ENCODE measurements at regions of chr3 and their contacts with region 1.

Region 1: GRCh38 chr3:139329345-139329850 is 14.4 kb upstream of the MRPS22 start:
- DNase-seq: peak; percentile 91
- CTCF ChIP-seq: peak; percentile 100

Region 2: DNA sequence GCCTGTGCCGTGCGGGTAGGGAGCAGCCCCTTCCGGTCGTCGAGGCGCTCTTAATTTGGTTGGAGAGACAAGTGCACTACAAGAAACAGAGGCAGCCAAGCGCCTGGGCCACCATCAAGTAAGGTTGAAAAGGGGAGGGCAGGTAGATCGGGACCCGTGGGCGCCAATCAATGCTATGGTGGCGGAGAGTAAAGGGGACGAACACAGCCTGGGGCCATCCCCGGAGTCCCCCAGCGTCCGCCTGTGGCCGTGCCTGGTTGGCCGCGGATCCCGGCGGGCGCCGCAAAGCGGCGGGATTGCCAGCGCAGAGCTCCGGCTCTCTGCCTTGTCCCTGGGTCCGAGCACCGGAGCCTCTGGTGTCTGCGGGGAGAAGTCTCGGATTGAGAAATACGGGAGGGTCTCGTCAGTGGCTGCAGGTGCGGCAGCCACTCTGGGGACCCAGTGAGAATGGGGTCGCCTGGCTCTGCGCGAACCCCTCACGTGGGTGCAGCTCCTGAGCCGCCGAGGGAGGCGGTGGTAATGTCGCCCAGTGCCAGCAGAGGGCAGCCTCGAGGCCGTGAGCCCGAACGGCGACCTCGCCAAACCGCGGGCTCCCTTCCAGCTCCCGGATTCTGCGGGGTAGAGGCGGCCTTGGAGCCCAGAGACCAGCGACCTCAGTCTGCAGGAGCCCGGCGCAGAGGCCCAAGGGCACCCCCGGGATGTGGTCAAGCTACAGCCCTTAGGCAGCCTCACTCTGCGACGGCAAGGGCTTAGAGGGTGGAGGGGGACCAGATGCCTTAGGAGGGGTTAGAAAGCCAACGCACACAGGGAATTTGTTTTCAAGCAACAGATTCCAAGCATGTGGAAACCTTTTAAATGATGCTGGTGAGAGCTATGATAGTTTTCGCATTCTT is 393.3 kb before region 1 on chr3:
- CTCF ChIA-PET with region 1: interaction called, 22 read pairs
- POLR2A ChIA-PET with region 1: no interaction called
- DNase-seq: peak; percentile 87
- CTCF ChIP-seq: peak; percentile 92

Region 3: GRCh38 chr3:139111392-139112229 is 217.8 kb before region 1 on chr3:
- CTCF ChIA-PET with region 1: interaction called, 35 read pairs
- POLR2A ChIA-PET with region 1: no interaction called
- DNase-seq: peak; percentile 68
- CTCF ChIP-seq: peak; percentile 78

Region 4: DNA sequence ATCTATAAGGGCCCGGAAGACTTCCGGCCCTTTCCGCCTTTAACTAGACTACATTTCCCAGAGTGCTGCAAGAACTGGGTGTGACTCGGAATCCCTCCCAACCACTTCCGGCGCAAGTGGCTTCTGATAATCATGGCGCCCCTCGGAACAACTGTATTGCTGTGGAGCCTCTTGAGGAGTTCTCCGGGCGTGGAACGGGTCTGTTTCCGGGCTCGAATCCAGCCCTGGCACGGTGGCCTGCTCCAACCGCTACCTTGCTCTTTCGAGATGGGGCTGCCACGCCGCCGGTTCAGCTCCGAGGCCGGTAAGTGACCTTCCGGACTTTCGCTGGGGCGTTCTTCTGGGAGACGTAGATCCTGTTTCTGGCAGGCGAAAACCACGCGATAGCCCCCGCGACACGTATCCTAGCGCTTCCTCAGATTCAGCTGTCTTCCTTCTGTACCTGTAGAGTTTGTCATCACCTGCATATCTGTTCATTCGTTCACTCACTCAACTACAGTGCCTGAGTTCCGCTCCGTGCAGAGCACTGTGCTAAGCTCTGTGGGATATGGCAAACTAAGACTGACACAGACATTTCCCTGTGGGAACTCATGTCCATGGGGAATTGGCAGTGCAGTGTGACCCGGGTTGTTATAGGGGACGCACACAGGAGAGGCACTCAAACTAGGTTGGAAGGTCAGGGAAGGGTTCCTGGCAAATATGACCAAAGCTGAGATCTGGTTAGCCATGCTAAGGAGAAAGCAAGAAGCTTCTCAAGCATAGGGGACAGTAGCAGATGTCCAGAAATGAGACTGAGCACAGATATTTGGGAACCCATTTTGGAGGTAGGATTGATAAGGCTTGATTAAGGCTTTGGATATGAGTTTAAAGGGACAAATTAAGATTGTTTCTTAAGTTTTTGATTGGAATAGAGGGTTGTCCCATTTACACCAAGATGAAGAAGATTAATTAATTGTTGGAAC is 14.8 kb after region 1 on chr3 and contains the start of gene MRPS22:
- CTCF ChIA-PET with region 1: interaction called, 34 read pairs
- POLR2A ChIA-PET with region 1: no interaction called
- DNase-seq: peak; percentile 92
- CTCF ChIP-seq: no peak

Region 5: GRCh38 chr3:139355476-139355875 is 26.1 kb after region 1 on chr3:
- CTCF ChIA-PET with region 1: no interaction called
- POLR2A ChIA-PET with region 1: no interaction called
- DNase-seq: no peak
- CTCF ChIP-seq: no peak

Region 6: DNA sequence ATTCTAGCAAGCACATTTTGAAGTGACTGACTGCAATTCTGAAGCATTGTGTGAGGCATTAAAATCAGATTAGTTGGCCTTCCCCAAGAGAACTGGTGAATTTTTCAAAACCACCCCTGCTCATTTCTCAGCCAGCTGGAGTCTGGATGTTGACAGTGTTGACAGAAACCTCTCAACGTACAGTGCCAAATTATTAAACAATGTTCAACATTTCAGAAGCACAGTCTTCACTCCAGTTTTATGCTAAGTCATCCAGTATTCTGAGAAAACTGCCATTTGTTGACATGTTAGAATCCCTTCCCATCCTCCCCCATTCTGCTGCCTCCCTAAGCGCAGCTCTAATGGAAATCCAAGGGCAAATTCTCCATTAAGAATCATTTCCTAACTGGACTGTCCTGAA is 979.1 kb after region 1 on chr3:
- CTCF ChIA-PET with region 1: no interaction called
- POLR2A ChIA-PET with region 1: no interaction called
- DNase-seq: no peak
- CTCF ChIP-seq: no peak

Measured in GM10248 (cell line).